ENCODE measurements at regions of chr2 and their contacts with region 1.

Region 1: GRCh38 chr2:235116885-235117492 is 165.2 kb downstream of the SH3BP4 start:
- DNase-seq: no peak
- H3K4me3 ChIP-seq: no peak overlapping the region
- H3K27ac ChIP-seq: no peak overlapping the region
- H3K27me3 ChIP-seq: no peaks in the 10 kb centered on the region
- CTCF ChIP-seq: peak; percentile 25

Region 2: GRCh38 chr2:234550511-234551107 is 566.4 kb before region 1 on chr2:
- in situ Hi-C with region 1: loop called (anchors 10 kb)
- DNase-seq: peak; percentile 78
- H3K4me3 ChIP-seq: no peak overlapping the region
- H3K27ac ChIP-seq: no peak overlapping the region
- H3K27me3 ChIP-seq: no peaks in the 10 kb centered on the region
- CTCF ChIP-seq: peak; percentile 96

Measured in brain microvascular endothelial cell (primary cell).